Activated B cell treated with CpG ODN at 0.5 μM for 24 hours (primary cell): ENCODE measurements at regions of chr1 and their contacts with region 1.

Region 1: GRCh38 chr1:156728597-156729462 is at the start of gene ISG20L2:
- DNase-seq: peak; percentile 83
- ATAC-seq: peak; percentile 91
- H3K4me3 Mint-ChIP-seq: no peak within 1 kb of the TSS
- H3K27ac Mint-ChIP-seq: peak within 1 kb of the TSS; percentile 93
- H3K4me1 Mint-ChIP-seq: peaks cover 25% of the 10 kb centered on the region
- H3K27me3 Mint-ChIP-seq: no peaks in the 10 kb centered on the region
- CTCF ChIP-seq: no peak
- total RNA-seq, gene ISG20L2: 50.8 and 53.0 TPM in 2 replicates

Region 2: GRCh38 chr1:156082309-156083091 is 646.3 kb before region 1 on chr1 and contains the start of gene MEX3A:
- CTCF ChIA-PET with region 1: no interaction called
- POLR2A ChIA-PET with region 1: no interaction called
- intact Hi-C with region 1: no loop called
- DNase-seq: peak; percentile 66
- ATAC-seq: peak; percentile 88
- H3K4me3 Mint-ChIP-seq: peak within 1 kb of the TSS; percentile 89
- H3K27ac Mint-ChIP-seq: no peak within 1 kb of the TSS
- H3K4me1 Mint-ChIP-seq: peaks cover 16% of the 10 kb centered on the region
- H3K27me3 Mint-ChIP-seq: peaks cover 14% of the 10 kb centered on the region
- CTCF ChIP-seq: no peak
- total RNA-seq, gene MEX3A: 0.39 and 0.47 TPM in 2 replicates

Region 3: DNA sequence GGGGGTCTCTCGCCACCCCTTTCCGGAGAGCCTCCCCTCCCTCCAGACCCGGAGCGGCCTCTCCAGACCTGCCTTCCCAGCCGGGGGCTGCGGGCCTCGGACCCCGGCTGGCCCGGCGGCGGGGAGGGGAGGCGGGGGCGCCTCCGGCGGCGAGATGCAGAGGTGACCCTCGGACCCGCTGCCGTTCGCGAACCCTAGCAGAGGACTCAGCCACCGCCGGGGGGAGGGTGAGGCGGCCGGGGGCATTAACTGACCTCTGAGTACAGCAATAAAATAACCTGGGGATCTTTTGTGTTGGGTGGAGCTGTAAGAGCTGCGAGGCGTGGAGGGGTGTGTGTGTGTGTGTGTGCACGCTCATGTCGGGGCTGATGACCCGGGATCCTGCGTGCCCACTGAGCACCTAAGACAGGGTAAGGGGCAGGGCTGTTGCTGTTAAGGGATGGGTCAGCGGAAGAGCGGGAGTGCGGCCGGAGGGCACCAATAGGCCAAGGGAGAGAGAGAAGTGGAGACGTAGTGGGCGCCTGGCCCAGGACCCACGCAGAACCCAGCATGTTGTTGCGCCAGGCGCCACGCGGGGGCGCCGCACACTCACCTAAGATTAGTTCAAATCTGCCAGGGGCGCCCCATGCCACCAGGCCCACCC is 103.3 kb before region 1 on chr1:
- CTCF ChIA-PET with region 1: interaction called, 17 read pairs
- POLR2A ChIA-PET with region 1: interaction called, 6 read pairs
- intact Hi-C with region 1: loop called (anchors 1 kb)
- DNase-seq: peak; percentile 66
- ATAC-seq: peak; percentile 71
- H3K4me3 Mint-ChIP-seq: peak overlapping the region; percentile 74
- H3K27ac Mint-ChIP-seq: peak overlapping the region; percentile 3
- H3K4me1 Mint-ChIP-seq: peaks cover 12% of the 10 kb centered on the region
- H3K27me3 Mint-ChIP-seq: peaks cover 32% of the 10 kb centered on the region
- CTCF ChIP-seq: peak; percentile 27

Region 4: GRCh38 chr1:156689035-156689952 is 39.5 kb before region 1 on chr1:
- CTCF ChIA-PET with region 1: interaction called, 182 read pairs
- POLR2A ChIA-PET with region 1: interaction called, 9 read pairs
- intact Hi-C with region 1: loop called (anchors 1 kb)
- DNase-seq: peak; percentile 55
- ATAC-seq: peak; percentile 98
- H3K4me3 Mint-ChIP-seq: no peak overlapping the region
- H3K27ac Mint-ChIP-seq: no peak overlapping the region
- H3K4me1 Mint-ChIP-seq: peaks cover 22% of the 10 kb centered on the region
- H3K27me3 Mint-ChIP-seq: peaks cover 51% of the 10 kb centered on the region
- CTCF ChIP-seq: peak; percentile 86

Region 5: DNA sequence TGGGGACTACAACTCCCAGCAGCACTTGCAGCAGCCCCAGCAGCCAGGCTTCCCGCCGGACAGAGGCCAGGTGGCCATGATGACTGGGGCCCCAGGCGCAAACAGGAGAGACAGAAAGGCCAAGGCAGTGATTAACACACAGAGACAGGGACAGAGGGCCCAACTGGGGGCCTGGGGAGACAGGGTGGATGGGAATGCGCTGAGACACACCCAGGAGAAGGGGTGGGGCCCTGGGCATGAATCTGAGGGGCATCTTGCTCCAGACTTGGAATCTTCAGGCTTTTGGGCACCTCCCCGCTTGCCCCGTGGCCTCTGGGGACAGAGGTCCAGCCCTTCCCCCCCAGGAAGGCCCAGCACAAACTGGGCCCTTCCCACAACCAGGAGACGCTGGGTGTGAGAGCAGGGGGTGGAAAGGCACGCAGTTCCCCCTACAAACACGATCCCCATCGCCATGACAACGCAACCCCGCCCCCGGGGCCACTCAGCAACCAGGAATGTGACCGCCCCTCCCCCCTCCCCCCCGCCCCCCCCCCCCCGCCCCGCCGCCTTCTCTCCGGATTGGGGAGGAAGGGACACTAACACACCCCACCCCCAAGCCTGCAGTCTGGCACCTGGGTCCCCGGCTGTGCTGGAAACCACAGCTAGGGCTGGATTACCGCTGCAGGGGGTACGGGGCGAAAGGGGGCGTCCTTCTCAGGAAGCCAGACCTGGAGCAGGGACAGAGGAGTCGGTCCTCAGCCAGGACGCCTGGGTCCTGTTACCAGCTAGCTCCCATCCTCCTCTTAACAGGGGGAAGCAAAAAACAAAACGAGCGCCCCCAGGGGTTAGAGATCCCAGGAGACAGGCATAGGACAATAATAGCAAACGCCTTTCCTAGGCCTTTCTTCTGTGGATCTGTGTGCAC is 18.1 kb after region 1 on chr1:
- CTCF ChIA-PET with region 1: interaction called, 14 read pairs
- POLR2A ChIA-PET with region 1: interaction called, 153 read pairs
- intact Hi-C with region 1: loop called (anchors 1 kb)
- DNase-seq: peak; percentile 50
- ATAC-seq: peak; percentile 33
- H3K4me3 Mint-ChIP-seq: peak overlapping the region; percentile 90
- H3K27ac Mint-ChIP-seq: peak overlapping the region; percentile 91
- H3K4me1 Mint-ChIP-seq: peaks cover 52% of the 10 kb centered on the region
- H3K27me3 Mint-ChIP-seq: no peaks in the 10 kb centered on the region
- CTCF ChIP-seq: no peak

Region 6: DNA sequence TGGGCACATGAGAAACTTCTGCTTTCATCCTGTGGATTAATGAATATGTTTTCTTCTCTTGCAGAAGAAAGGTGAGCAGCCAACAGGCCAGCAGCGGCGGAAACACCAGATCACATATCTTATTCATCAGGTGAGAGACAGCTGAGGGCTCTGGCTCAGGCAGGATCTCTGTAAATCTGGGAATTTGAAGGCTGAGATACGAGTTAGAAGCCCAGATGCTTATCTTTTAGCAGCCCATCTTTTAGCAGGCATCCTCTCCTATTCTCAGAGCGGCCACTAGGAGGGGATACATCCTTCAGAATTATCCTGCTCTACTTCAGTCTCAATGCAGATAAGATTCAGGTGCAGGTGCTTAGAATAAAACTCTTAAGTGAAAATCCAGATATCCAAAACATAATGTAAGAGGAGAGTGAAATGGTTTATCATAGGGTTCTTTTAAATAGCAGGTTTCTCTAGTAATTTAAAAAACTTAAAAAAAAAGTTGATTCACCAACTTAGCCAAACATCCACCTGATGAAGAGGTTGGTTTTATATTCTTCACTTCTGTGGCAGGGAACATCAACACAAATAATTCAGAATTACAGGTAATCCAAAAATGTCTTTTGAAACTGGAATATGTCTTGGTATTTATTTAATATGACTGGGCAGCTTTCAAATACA is 68.5 kb after region 1 on chr1:
- CTCF ChIA-PET with region 1: interaction called, 14 read pairs
- POLR2A ChIA-PET with region 1: no interaction called
- intact Hi-C with region 1: no loop called
- DNase-seq: no peak
- ATAC-seq: peak; percentile 73
- H3K4me3 Mint-ChIP-seq: no peak overlapping the region
- H3K27ac Mint-ChIP-seq: no peak overlapping the region
- H3K4me1 Mint-ChIP-seq: peaks cover 7% of the 10 kb centered on the region
- H3K27me3 Mint-ChIP-seq: no peaks in the 10 kb centered on the region
- CTCF ChIP-seq: peak; percentile 57